ENCODE measurements at regions of chr18 and their contacts with region 1.

Region 1: DNA sequence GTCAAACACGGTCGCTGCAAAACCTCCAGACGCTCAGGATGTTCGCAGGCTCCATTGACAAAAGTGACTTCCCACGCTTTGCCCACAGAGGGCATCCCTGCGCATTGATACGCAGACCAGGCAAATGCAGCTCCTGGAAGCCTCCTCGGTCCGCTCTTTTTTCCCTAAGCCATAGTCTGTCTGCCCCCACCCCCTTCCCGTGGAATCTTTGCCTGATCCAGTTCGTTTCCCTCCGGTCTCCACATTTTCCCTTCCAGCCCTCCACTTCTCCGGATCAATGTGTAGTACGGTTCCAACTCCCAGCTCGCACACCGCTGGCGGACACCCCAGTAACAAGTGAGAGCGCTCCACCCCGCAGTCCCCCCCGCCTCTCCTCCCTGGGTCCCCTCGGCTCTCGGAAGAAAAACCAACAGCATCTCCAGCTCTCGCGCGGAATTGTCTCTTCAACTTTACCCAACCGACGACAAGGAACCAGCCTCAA is at the start of gene DCC:
- DNase-seq: no peak
- ATAC-seq: peak; percentile 62
- H3K4me3 ChIP-seq: no peak within 1 kb of the TSS
- H3K27ac ChIP-seq: no peak within 1 kb of the TSS
- H3K4me1 ChIP-seq: no peaks in the 10 kb centered on the region
- H3K27me3 ChIP-seq: peaks cover 4 to 5% of the 10 kb centered on the region in 2 experiments; a peak in 1 of 4 replicates
- CTCF ChIP-seq: peak in 2 of 3 experiments; percentile 41 to 48; a peak in 4 of 6 replicates
- EP300 ChIP-seq: no peak
- POLR2A ChIP-seq: no peak
- RAD21 ChIP-seq: peak; percentile 29
- polyA plus RNA-seq, gene DCC: not detected

Region 2: DNA sequence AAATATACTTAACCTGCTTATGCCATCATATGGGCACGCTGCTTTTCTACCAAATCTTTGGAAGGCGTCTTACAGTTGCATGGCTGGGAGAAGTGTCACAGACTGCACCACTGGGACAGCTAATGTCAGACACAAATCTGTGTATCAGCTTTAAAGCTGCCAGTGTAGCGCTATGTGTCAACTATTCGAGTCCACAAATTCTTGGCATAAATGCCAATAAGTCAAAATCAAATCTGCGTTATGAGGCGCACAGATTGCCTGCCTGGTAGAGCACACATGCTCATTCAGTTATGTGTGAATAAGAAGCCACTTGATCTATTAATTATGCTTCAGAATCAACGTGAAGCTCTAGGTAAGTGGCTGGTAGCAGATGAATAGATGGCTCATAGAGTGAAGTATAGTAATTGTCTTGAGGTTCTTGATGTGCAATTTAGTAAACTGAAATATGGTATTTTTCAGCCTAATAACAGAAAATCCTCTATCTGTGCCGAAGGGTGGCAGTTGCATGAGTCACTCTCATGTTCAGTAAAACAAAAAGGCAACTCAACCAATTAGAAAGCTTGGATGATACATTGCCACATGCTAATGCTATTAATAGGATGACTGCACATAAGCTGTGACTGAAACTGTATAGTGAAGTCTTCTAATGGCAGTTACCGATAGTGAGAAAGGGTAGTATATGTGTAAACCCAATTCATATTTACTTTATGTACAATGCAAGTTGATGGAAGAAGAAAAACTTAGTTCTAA is 52.1 kb after region 1 on chr18:
- CTCF ChIA-PET with region 1: interaction called, 3 read pairs
- POLR2A ChIA-PET with region 1: no interaction called
- RAD21 ChIA-PET with region 1: no interaction called
- SMC1A ChIA-PET with region 1: no interaction called
- in situ Hi-C with region 1: no loop called
- intact Hi-C with region 1: loop called (anchors 5 kb)
- DNase-seq: peak; percentile 52
- ATAC-seq: peak; percentile 71
- H3K4me3 ChIP-seq: no peak overlapping the region
- H3K27ac ChIP-seq: no peak overlapping the region
- H3K4me1 ChIP-seq: peaks cover 2% of the 10 kb centered on the region; the same call in 1 of the 2 replicates
- H3K27me3 ChIP-seq: no peaks in the 10 kb centered on the region
- CTCF ChIP-seq: no peak
- EP300 ChIP-seq: no peak
- POLR2A ChIP-seq: no peak
- RAD21 ChIP-seq: no peak

Region 3: GRCh38 chr18:52670896-52671295 is 331.0 kb after region 1 on chr18:
- CTCF ChIA-PET with region 1: no interaction called
- POLR2A ChIA-PET with region 1: no interaction called
- RAD21 ChIA-PET with region 1: no interaction called
- SMC1A ChIA-PET with region 1: no interaction called
- in situ Hi-C with region 1: no loop called
- intact Hi-C with region 1: loop called (anchors 1 kb)
- DNase-seq: no peak
- ATAC-seq: no peak; the same call in 2 of the 3 replicates
- H3K4me3 ChIP-seq: no peak overlapping the region
- H3K27ac ChIP-seq: no peak overlapping the region
- H3K4me1 ChIP-seq: no peaks in the 10 kb centered on the region
- H3K27me3 ChIP-seq: no peaks in the 10 kb centered on the region; a peak in 1 of 4 replicates
- CTCF ChIP-seq: peak; percentile 9 to 30 (median 17); a peak in 2 of 6 replicates
- EP300 ChIP-seq: no peak
- POLR2A ChIP-seq: no peak
- RAD21 ChIP-seq: peak; percentile 44